Heart left ventricle (tissue), 16 donors: ENCODE measurements at regions of chr1 and their contacts with region 1.

Region 1: GRCh38 chr1:6569033-6569432 is 10.8 kb upstream of the ZBTB48 start:
- DNase-seq: no peak
- ATAC-seq: no peak
- H3K4me3 ChIP-seq: no peak overlapping the region
- H3K27ac ChIP-seq: no peak overlapping the region
- H3K4me1 ChIP-seq: no peaks in the 10 kb centered on the region
- H3K27me3 ChIP-seq: no peaks in the 10 kb centered on the region
- CTCF ChIP-seq: no peak
- POLR2A ChIP-seq: no peak

Region 2: DNA sequence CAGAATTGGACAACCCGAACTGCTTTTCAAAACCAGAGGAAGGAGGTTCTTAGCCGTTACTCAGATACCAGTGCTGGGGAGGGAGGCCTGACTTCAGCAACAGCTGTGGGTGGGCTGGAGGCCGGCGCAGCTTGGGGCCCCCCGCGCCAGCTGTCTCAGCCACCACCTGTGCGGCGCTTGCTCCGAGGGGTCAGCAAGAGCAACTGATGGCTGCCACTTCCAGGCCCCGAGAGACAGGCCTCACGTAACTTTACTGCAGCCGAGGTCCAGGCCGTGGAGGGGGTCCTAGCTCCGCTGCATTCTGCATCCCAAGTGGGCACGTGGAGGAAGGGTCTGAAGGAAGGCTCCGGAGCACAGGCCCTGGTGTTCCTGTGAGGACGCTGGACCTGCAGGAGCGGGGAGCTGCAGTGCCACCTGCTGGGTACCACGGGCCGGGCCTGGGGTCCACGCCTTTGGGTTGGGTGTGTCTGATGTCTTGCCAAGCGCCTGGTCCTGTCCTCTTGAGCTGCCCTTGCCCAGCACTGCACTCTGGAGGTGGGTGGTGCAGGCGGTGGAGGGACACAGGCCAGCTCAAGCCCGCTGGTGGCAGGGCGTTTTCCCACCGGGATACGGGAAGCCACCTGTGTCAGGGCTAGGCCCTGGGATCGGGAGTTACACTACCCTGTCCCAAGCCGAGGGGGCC is 65.5 kb after region 1 on chr1:
- intact Hi-C with region 1: loop called in 1 of 10 experiments (anchors 5 kb)
- DNase-seq: peak; percentile 61 to 83 (median 80)
- ATAC-seq: peak; percentile 59 to 84 (median 80)
- H3K4me3 ChIP-seq: no peak overlapping the region
- H3K27ac ChIP-seq: peak overlapping the region in 4 of 12 donors; percentile 11 to 48 (median 30)
- H3K4me1 ChIP-seq: peaks cover 0 to 15% (median 0%) of the 10 kb centered on the region in 12 donors
- H3K27me3 ChIP-seq: no peaks in the 10 kb centered on the region
- CTCF ChIP-seq: peak; percentile 19 to 68 (median 53)
- POLR2A ChIP-seq: no peak

Region 3: GRCh38 chr1:6667139-6667538 is 98.1 kb after region 1 on chr1:
- intact Hi-C with region 1: no loop called
- DNase-seq: peak in 4 of 5 donors; percentile 40 to 61 (median 53)
- ATAC-seq: peak; percentile 87 to 92 (median 90)
- H3K4me3 ChIP-seq: no peak overlapping the region
- H3K27ac ChIP-seq: peak overlapping the region in 11 of 12 donors; percentile 55 to 84 (median 68)
- H3K4me1 ChIP-seq: peaks cover 0 to 26% (median 9%) of the 10 kb centered on the region in 12 donors
- H3K27me3 ChIP-seq: no peaks in the 10 kb centered on the region
- CTCF ChIP-seq: no peak
- POLR2A ChIP-seq: no peak

Region 4: DNA sequence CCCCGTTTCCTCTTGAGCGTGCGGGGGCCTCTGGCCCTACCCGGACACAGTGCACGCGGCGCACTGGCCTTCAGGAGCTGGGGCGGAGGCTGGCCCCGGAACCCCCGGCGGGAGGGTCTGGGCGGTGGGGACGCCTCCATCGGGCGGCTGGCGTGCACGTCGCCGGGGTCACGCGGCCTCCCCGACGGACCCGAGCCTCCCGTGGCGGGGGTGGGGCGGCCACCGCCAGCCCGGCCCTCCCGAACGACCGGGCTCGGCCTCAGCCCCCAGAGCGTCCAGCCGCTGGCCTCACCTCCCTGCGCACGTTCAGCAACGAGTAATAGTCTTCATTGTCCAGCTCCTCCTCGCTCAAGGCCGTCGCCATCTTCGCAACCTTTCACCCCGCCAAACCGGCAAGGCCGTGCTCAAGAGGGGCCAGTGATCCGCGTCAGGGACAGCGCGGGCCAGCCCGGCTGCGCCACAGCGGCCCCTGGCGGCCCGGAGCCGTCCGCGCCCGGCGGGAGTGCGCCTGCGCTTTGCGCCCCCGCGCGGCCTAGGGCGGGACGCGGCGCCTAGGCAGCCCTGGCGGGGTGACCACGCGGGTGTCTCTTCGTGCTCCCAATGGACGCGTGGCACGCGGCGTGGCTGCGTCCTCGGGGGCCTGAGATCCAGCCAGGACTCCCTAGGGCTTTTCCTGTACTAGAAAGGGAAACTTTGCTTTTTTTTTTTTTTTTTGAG is 132.6 kb after region 1 on chr1 and contains the start of gene DNAJC11:
- intact Hi-C with region 1: no loop called
- DNase-seq: peak; percentile 90 to 95 (median 92)
- ATAC-seq: peak; percentile 89 to 98 (median 95)
- H3K4me3 ChIP-seq: peak within 1 kb of the TSS; percentile 68 to 100 (median 94)
- H3K27ac ChIP-seq: peak within 1 kb of the TSS; percentile 70 to 92 (median 87)
- H3K4me1 ChIP-seq: peaks cover 5 to 29% (median 19%) of the 10 kb centered on the region in 12 donors
- H3K27me3 ChIP-seq: no peaks in the 10 kb centered on the region
- CTCF ChIP-seq: peak; percentile 60 to 100 (median 93)
- POLR2A ChIP-seq: peak in 1 of 2 donors; percentile 34
- total RNA-seq, gene DNAJC11: 42.4 to 67.4 (median 61.2) TPM